CD4-positive, alpha-beta memory T cell (primary cell): ENCODE measurements at regions of chr10 and their contacts with region 1.

Region 1: DNA sequence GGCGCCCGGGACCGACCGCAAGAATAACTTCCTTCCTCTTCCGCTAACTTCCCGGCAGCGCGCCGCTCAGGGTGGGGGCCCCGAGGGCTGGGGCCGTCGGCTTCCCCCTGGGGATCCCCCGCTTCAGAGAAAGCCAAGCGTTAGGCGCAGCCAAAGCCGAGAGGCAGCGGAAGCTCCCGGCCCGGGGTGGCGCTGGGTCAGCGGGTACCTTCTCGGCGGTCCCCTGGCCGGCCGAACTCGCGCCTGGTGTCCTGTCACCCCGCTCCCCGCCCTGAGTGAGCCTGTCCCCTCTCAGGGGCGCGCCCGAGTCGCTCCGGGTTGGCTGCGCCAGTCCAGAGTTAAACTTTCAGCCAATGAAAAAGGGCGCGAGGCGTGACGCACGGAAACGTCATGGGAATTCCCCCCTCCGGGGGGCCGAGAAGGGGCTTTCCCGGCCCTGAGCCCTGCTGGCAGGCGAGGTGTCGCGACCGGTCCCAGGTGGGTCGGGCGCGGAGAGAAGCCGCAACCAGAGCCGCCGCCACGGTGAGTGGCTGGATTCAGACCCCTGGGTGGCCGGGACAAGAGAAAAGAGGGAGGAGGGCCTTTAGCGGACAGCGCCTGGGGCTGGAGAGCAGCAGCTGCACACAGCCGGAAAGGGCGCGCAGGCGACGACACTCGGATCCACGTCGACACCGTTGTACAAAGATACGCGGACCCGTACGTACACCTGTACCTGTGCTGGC is 1.3 kb upstream of the NFKB2 start:
- DNase-seq: peak; percentile 99 to 100 (median 99)
- H3K4me3 ChIP-seq: peak overlapping the region; percentile 97 to 98
- H3K4me3 Mint-ChIP-seq: peak overlapping the region; percentile 94 to 98 (median 96)
- H3K27ac ChIP-seq: peak overlapping the region; percentile 100
- H3K27ac Mint-ChIP-seq: peak overlapping the region; percentile 98 to 100 (median 100)
- H3K4me1 ChIP-seq: peaks cover 43% of the 10 kb centered on the region
- H3K4me1 Mint-ChIP-seq: peaks cover 18 to 62% (median 34%) of the 10 kb centered on the region in 4 donors
- H3K27me3 ChIP-seq: no peaks in the 10 kb centered on the region
- H3K27me3 Mint-ChIP-seq: no peaks in the 10 kb centered on the region

Region 2: DNA sequence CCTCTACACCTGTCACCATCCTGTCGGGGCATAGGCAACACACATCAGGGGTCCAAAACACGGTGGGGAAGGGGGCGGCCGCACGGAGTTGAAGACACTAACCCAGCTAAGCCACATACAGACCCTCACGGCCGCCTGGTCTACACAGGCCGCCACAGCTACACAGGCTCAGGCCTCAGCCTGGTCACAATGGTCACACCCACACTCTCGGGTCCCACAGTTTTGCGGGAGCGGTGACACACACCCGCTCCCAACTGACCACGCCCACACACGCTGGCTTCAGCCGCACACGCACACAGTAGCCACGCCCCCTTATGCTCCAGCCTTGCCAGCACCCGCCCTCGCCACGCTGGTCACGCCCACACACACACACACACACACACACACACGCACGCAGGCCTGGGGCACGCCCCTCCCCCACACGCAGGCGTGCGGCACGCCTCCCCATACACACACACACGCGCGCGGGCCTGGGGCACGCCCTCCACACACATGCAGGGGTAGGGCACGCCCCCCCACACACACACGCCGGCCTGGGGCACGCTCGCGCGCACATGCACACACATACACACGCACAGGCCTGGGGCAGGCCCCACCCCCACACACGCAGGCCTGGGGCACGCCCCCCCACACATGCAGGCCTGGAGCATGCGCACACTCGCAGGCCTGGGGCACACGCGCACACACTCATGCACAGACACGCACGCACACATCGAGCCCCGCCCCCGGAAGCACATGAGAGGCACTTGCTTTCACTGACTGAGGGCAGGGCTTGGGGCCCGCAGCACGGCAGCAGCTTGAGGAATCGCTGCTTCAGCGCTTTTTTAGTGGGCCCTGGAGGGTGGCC is 563.7 kb before region 1 on chr10:
- CTCF ChIA-PET with region 1: no interaction called
- POLR2A ChIA-PET with region 1: no interaction called
- intact Hi-C with region 1: loop called (anchors 1 kb)
- DNase-seq: peak; percentile 95 to 98 (median 97)
- H3K4me3 ChIP-seq: peak overlapping the region; percentile 57 to 68
- H3K4me3 Mint-ChIP-seq: peak overlapping the region; percentile 84 to 93 (median 88)
- H3K27ac ChIP-seq: peak overlapping the region; percentile 87
- H3K27ac Mint-ChIP-seq: peak overlapping the region; percentile 98 to 100 (median 99)
- H3K4me1 ChIP-seq: peaks cover 59% of the 10 kb centered on the region
- H3K4me1 Mint-ChIP-seq: peaks cover 44 to 80% (median 57%) of the 10 kb centered on the region in 4 donors
- H3K27me3 ChIP-seq: no peaks in the 10 kb centered on the region
- H3K27me3 Mint-ChIP-seq: peaks cover 2 to 7% of the 10 kb centered on the region in 2 donors

Region 3: DNA sequence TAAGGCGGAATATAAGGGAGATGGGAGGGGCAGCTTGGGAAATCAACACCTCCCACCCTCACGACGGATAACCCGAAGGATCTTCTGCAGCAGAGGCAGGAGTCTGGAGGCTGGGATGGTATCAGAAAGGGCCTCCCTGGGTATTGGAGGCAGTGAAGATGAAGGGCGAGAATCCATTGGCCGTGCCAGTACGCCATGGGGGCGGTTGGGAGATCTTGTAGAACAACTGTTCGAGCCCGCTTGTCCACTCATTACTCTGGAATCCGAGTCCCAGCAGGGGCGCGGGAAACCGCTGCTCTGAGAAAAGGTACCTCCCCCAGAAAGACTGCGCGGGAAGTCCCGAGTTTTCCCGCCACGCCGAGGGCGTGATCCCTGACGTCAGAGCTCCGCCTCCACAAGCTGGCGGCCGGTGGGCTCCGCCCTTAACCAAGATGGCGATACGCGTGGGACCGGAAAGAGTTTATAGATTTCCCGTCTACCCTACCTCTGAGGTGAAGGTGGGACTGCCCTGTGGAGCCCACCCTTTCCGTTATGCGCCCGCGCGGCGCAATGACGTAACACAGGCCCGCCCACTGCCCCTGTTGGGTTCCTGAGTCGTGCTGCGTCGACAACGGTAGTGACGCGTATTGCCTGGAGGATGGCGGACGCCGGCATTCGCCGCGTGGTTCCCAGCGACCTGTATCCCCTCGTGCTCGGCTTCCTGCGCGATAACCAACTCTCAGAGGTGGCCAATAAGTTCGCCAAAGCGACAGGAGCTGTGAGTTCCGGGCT is 242.3 kb before region 1 on chr10 and contains the start of gene NOLC1:
- CTCF ChIA-PET with region 1: no interaction called
- POLR2A ChIA-PET with region 1: no interaction called
- intact Hi-C with region 1: loop called (anchors 1 kb)
- DNase-seq: peak; percentile 99 to 100 (median 100)
- H3K4me3 ChIP-seq: peak within 1 kb of the TSS; percentile 82 to 91
- H3K4me3 Mint-ChIP-seq: peak within 1 kb of the TSS; percentile 91 to 97 (median 94)
- H3K27ac ChIP-seq: peak within 1 kb of the TSS; percentile 87
- H3K27ac Mint-ChIP-seq: peak within 1 kb of the TSS; percentile 91 to 99 (median 97)
- H3K4me1 ChIP-seq: peaks cover 34% of the 10 kb centered on the region
- H3K4me1 Mint-ChIP-seq: peaks cover 21 to 60% (median 42%) of the 10 kb centered on the region in 4 donors
- H3K27me3 ChIP-seq: no peaks in the 10 kb centered on the region
- H3K27me3 Mint-ChIP-seq: no peaks in the 10 kb centered on the region
- total RNA-seq, gene NOLC1: 63.7 to 71.6 TPM

Region 4: DNA sequence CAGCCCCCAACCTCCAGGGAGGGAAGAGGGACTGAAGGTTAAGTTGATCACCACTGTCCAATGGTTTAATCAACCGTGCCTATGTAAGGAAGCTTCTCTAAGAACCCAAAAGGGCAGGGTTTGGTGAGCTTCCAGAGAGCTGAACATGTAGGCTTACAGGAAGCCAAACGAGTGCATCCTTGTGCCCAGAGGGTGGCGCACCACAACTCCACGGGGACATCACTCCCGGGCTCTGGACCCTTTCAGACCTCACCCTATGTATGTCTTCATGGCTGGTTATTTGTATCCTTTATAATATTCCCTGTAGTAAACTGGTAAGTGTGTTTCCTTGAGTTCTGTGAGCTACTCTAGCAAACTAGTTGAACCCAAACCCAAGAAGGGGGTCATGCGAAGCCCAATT is 10.2 kb before region 1 on chr10:
- CTCF ChIA-PET with region 1: interaction called, 10 read pairs
- POLR2A ChIA-PET with region 1: interaction called, 9 read pairs
- intact Hi-C with region 1: no loop called
- DNase-seq: no peak
- H3K4me3 ChIP-seq: no peak overlapping the region
- H3K4me3 Mint-ChIP-seq: no peak overlapping the region
- H3K27ac ChIP-seq: no peak overlapping the region
- H3K27ac Mint-ChIP-seq: peak overlapping the region in 3 of 7 donors; percentile 25 to 55 (median 35)
- H3K4me1 ChIP-seq: no peaks in the 10 kb centered on the region
- H3K4me1 Mint-ChIP-seq: peaks cover 0 to 4% (median 2%) of the 10 kb centered on the region in 4 donors
- H3K27me3 ChIP-seq: no peaks in the 10 kb centered on the region
- H3K27me3 Mint-ChIP-seq: no peaks in the 10 kb centered on the region

Region 5: GRCh38 chr10:102420810-102421644 is 26.8 kb after region 1 on chr10 and contains the start of gene FBXL15:
- CTCF ChIA-PET with region 1: interaction called, 36 read pairs
- POLR2A ChIA-PET with region 1: interaction called, 122 read pairs
- intact Hi-C with region 1: loop called (anchors 1 kb)
- DNase-seq: peak; percentile 92 to 94 (median 93)
- H3K4me3 ChIP-seq: peak within 1 kb of the TSS; percentile 61 to 90
- H3K4me3 Mint-ChIP-seq: peak within 1 kb of the TSS; percentile 90 to 99 (median 96)
- H3K27ac ChIP-seq: peak within 1 kb of the TSS; percentile 64
- H3K27ac Mint-ChIP-seq: peak within 1 kb of the TSS; percentile 92 to 98 (median 96)
- H3K4me1 ChIP-seq: peaks cover 37% of the 10 kb centered on the region
- H3K4me1 Mint-ChIP-seq: peaks cover 17 to 53% (median 33%) of the 10 kb centered on the region in 4 donors
- H3K27me3 ChIP-seq: peaks cover 9% of the 10 kb centered on the region
- H3K27me3 Mint-ChIP-seq: peaks cover 10 to 16% of the 10 kb centered on the region in 2 donors
- total RNA-seq, gene FBXL15: 21.1 to 24.1 TPM

Region 6: DNA sequence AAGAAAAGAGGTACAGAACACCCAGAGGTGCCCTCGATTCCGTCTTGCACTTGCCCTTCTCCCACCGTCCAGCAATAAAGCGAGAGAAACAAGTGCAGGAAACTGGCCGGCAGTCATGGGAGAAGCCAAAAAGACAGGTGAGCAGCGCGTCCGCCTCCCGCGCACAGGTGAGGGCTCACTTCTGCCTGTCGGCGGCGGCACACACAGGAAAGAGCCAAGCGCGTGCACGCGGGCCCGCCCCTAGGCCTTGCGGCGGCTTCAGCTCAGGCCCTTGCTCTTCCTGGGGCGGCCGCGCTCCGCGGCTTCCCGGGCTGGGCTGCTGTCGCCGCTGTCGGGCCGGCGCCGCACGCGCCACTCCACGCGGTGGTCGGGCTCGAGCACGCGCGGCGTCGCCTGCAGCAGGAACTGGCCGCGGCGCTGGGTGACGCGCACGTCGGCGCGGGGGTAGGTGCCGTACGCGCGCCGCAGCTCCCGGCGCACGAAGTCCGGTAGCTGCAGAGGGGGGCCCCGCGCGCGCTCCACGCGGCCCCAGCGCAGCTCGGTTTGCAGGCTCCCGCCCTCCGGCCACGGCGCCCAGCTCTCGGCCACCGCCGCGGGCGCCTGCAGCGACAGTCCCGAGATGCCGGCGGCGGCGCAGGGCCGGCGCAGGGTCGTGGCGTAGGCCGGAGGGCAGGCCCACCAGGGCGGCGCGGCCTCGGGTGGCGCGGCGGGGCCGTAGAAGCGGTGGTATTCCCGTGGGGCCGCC is 56.1 kb after region 1 on chr10:
- CTCF ChIA-PET with region 1: interaction called, 20 read pairs
- POLR2A ChIA-PET with region 1: interaction called, 80 read pairs
- intact Hi-C with region 1: loop called (anchors 1 kb)
- DNase-seq: peak; percentile 93 to 96 (median 93)
- H3K4me3 ChIP-seq: peak overlapping the region; percentile 96
- H3K4me3 Mint-ChIP-seq: peak overlapping the region; percentile 90 to 96 (median 94)
- H3K27ac ChIP-seq: peak overlapping the region; percentile 79
- H3K27ac Mint-ChIP-seq: peak overlapping the region; percentile 81 to 97 (median 96)
- H3K4me1 ChIP-seq: peaks cover 23% of the 10 kb centered on the region
- H3K4me1 Mint-ChIP-seq: peaks cover 10 to 31% (median 23%) of the 10 kb centered on the region in 4 donors
- H3K27me3 ChIP-seq: no peaks in the 10 kb centered on the region
- H3K27me3 Mint-ChIP-seq: no peaks in the 10 kb centered on the region

Region 7: DNA sequence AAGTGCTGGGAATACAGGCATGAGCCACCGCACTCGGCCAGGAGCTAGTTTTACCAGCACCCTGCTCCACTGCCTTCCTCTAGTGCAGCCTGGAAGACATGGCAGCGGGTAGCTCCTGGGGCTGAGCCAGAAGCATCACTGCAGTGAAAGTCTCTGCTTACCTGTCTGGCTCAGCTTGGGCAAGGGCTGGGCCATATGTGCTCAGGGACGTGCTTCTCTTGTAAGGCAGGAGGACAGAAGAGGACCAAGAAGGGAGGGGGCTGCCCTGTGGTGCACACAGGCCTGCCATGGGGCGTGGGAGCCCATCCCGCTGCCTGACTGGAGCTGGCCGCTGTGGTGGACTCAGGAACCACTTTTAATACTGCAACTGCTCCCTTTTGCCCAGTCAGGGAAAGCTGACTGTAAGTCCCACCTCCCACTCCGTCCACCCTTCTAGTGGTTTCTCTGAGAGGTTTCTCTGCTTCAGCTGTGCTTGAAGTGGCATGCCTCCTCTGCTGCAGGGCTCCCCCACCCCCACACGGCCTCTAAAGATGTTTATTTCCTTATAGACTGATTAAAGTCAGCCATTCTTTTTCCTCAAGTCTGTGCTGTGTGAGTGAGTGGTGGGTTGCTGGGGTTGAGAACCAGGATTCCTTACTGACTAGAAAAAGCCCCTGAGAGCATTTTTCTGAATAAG is 82.4 kb after region 1 on chr10:
- CTCF ChIA-PET with region 1: interaction called, 48 read pairs
- POLR2A ChIA-PET with region 1: interaction called, 13 read pairs
- intact Hi-C with region 1: loop called (anchors 1 kb)
- DNase-seq: no peak
- H3K4me3 ChIP-seq: no peak overlapping the region
- H3K4me3 Mint-ChIP-seq: no peak overlapping the region
- H3K27ac ChIP-seq: no peak overlapping the region
- H3K27ac Mint-ChIP-seq: peak overlapping the region in 6 of 7 donors; percentile 18 to 86 (median 59)
- H3K4me1 ChIP-seq: peaks cover 20% of the 10 kb centered on the region
- H3K4me1 Mint-ChIP-seq: peaks cover 11 to 28% (median 17%) of the 10 kb centered on the region in 4 donors
- H3K27me3 ChIP-seq: no peaks in the 10 kb centered on the region
- H3K27me3 Mint-ChIP-seq: no peaks in the 10 kb centered on the region

Region 8: DNA sequence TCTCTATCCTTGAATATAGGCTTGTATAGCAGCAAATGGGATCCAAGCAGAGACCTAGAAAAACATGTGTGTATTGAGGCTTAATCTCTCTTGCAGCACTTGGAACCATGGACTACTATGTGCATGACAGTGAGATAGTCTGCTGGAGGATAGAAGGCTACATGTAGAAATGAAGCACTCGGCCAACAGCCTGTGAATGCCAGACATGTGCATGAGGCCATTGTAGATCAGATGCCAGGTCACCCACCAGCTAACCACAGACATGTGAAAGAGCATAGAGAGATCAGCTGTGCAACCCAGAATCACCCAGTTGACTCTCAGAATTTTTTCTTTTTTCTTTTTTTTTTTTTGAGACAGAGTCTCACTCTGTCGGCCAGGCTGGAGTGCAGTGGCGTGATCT is 708.0 kb after region 1 on chr10:
- CTCF ChIA-PET with region 1: no interaction called
- POLR2A ChIA-PET with region 1: no interaction called
- intact Hi-C with region 1: no loop called
- DNase-seq: no peak
- H3K4me3 ChIP-seq: no peak overlapping the region
- H3K4me3 Mint-ChIP-seq: no peak overlapping the region
- H3K27ac ChIP-seq: no peak overlapping the region
- H3K27ac Mint-ChIP-seq: peak overlapping the region in 1 of 7 donors; percentile 57
- H3K4me1 ChIP-seq: no peaks in the 10 kb centered on the region
- H3K4me1 Mint-ChIP-seq: no peaks in the 10 kb centered on the region
- H3K27me3 ChIP-seq: no peaks in the 10 kb centered on the region
- H3K27me3 Mint-ChIP-seq: no peaks in the 10 kb centered on the region

Region 9: GRCh38 chr10:103451831-103452505 is 1057.7 kb after region 1 on chr10 and contains the start of gene CALHM2:
- CTCF ChIA-PET with region 1: no interaction called
- POLR2A ChIA-PET with region 1: no interaction called
- intact Hi-C with region 1: no loop called
- DNase-seq: peak in 4 of 5 donors; percentile 40 to 57 (median 44)
- H3K4me3 ChIP-seq: peak within 1 kb of the TSS; percentile 79 to 97
- H3K4me3 Mint-ChIP-seq: peak within 1 kb of the TSS; percentile 90 to 99 (median 96)
- H3K27ac ChIP-seq: peak within 1 kb of the TSS; percentile 72
- H3K27ac Mint-ChIP-seq: peak within 1 kb of the TSS; percentile 81 to 98 (median 95)
- H3K4me1 ChIP-seq: peaks cover 54% of the 10 kb centered on the region
- H3K4me1 Mint-ChIP-seq: peaks cover 42 to 74% (median 51%) of the 10 kb centered on the region in 4 donors
- H3K27me3 ChIP-seq: no peaks in the 10 kb centered on the region
- H3K27me3 Mint-ChIP-seq: no peaks in the 10 kb centered on the region
- total RNA-seq, gene CALHM2: 80.5 to 84.6 TPM